Dorsolateral prefrontal cortex (tissue), 120 donors: ENCODE measurements at regions of chr12 and their contacts with region 1.

Region 1: DNA sequence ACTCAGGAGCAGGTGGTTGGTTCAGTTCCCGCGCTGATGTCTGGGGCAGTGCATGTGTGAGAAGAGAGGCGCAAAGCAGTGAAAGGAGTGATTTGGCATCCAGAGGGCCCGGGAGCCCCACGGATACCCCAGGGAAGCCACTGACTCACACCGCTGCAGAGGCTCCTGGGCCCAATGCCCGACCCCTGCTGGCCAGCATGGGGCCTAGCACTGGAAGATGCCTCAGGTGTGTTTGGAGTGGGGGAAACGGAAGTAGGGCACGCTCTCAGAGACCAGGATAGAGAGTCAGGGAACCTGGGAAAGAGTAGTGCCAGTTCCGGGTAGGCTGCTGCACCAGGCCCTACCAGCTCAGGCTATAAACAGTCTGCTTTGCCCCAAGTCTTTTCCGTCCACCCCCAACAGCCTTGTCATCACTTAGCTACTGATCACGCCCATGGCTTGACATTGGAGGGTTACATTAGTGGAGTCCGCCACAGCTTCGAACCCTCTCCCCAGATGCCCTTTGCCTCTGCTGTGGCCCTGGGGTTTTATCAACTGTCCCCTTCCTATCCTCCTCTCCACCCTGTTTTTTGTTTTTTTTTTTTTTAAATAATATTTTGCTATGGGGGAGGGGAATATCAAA is 9.5 kb upstream of the CSAD start:
- DNase-seq: peak in 3 of 10 donors; percentile 14 to 28 (median 20)
- H3K4me3 ChIP-seq: no peak overlapping the region
- H3K27ac ChIP-seq: peak overlapping the region in 11 of 59 donors; percentile 16 to 51 (median 29)
- H3K27me3 ChIP-seq: no peaks in the 10 kb centered on the region
- CTCF ChIP-seq: peak in 55 of 56 donors; percentile 19 to 68 (median 54)

Region 2: GRCh38 chr12:52879394-52880351 is 310.5 kb before region 1 on chr12:
- intact Hi-C with region 1: no loop called
- DNase-seq: peak; percentile 55 to 82 (median 74)
- H3K4me3 ChIP-seq: peak overlapping the region in 52 of 59 donors; percentile 4 to 58 (median 38)
- H3K27ac ChIP-seq: peak overlapping the region in 13 of 59 donors; percentile 1 to 76 (median 41)
- H3K27me3 ChIP-seq: peaks cover 0 to 9% (median 0%) of the 10 kb centered on the region in 45 donors
- CTCF ChIP-seq: peak; percentile 24 to 90 (median 74)

Region 3: DNA sequence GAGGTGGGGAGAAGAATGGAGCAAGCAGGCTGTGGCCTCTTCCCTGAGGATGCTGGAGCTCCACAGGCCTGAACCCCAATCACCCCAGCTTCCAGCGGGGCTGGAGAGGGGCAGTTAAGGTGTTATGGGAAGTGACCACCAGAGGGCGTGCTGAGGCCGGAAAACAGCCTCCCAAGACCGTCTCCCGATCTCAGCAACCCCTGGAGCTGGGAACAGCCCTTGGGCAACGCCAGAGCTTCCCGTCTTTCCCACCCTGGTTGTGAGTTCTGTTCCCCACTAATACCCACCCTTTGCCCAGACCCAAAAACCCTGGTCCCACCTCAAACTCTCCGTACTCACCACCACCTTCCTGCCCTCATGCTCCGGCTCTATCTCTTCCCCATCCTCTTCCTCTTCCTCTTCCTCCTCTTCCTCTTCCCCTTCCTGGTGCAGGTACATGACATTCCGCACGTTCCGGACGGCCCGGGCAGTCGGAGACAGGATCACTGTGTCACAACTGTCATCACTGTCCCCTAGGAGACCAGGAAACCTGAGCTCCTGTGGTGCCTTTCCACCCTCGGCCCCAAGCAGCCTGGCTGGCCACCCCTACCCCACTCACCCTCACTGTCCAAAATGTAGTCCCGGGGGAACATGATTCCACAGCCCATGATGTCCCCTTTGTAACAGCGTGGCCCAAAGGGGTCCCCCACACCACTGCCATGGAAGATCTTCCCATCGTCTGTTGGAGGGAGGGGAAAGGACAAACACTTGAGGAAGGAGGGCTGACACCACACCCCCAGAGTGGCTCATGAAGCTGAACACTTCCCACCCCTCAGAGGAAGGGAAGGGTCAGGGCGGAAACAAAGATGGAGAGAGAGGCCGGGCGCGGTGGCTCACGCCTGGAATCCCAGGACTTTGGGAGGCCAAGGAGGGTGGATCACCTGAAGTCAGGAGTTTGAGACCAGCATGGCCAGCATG is 124.0 kb before region 1 on chr12:
- intact Hi-C with region 1: loop called (anchors 2 to 5 kb)
- DNase-seq: peak in 9 of 10 donors; percentile 61 to 83 (median 74)
- H3K4me3 ChIP-seq: no peak overlapping the region
- H3K27ac ChIP-seq: peak overlapping the region in 56 of 59 donors; percentile 4 to 97 (median 73)
- H3K27me3 ChIP-seq: no peaks in the 10 kb centered on the region
- CTCF ChIP-seq: peak; percentile 85 to 98 (median 93)

Region 4: DNA sequence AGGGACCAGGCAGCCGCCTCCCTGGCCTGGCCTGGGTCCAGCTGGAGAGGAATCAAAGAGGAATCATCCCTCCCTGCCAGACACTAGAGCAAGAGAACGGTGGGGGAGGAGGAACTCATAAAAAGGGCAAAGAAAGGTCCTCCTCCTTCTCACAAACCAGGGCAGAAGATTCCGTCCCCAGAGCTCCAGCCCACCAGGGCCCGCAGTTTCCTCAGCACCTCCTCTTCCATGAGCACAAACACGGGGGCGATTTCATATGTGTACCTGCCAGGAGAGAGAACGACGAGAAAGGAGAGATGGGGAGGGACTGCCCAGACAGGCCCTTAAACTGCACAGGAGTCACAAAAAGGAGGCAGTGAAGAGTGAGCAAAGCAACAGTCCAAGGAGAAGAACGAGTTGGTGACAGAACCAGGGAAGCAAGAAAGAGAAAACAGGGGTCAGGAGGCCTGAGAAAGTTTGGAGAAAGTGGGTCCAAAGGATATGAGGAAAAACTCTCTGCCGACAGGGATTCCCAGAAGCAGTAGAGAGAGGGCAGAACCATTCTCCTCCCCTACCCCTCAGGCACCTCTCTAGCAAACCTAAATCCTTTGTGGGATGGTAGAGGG is 18.4 kb before region 1 on chr12:
- intact Hi-C with region 1: loop called in 1 of 2 experiments (anchors 2 kb)
- DNase-seq: no peak
- H3K4me3 ChIP-seq: no peak overlapping the region
- H3K27ac ChIP-seq: no peak overlapping the region
- H3K27me3 ChIP-seq: no peaks in the 10 kb centered on the region
- CTCF ChIP-seq: no peak